Heart right ventricle (tissue), 16 donors: ENCODE measurements at regions of chr10 and their contacts with region 1.

Region 1: GRCh38 chr10:114550756-114551635 is 107.1 kb downstream of the ABLIM1 start:
- DNase-seq: peak; percentile 59 to 80
- ATAC-seq: peak; percentile 27 to 70 (median 48)
- H3K4me3 ChIP-seq: peak overlapping the region in 6 of 10 donors; percentile 12 to 36 (median 20)
- H3K27ac ChIP-seq: peak overlapping the region; percentile 58 to 78 (median 74)
- H3K4me1 ChIP-seq: peaks cover 10 to 99% (median 70%) of the 10 kb centered on the region in 9 donors
- H3K27me3 ChIP-seq: no peaks in the 10 kb centered on the region
- CTCF ChIP-seq: peak in 8 of 9 donors; percentile 17 to 70 (median 54)

Region 2: DNA sequence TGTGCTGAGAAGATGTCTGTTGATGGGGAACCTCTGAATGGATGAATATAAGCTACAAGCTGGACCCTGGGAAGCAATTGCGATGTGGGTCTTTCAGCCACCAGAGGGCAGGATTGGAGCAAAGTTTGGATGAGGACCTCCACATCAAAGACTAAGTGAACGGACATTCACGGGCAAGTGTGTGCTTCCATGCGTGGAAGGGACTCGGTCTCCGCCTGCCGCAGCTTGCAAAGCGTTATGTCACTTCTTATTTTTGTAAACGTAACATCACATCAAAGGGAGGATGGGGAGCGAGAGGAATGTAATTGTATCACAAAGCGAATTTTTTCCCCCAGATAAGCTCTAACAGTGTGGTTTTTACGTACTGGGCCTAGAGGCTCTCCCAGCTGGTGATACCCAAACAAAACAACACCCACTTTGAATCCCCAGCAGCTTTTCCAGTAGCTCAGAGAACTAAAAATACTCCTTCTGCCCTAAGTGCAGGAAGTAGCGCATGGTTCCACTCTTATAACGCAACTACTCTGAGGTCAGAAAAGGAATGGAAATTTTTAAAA is 246.9 kb before region 1 on chr10:
- intact Hi-C with region 1: loop called in 3 of 10 experiments (anchors 5 to 10 kb)
- DNase-seq: peak; percentile 73 to 90
- ATAC-seq: peak; percentile 80 to 91 (median 87)
- H3K4me3 ChIP-seq: peak overlapping the region in 9 of 10 donors; percentile 26 to 51 (median 44)
- H3K27ac ChIP-seq: peak overlapping the region in 8 of 10 donors; percentile 14 to 65 (median 44)
- H3K4me1 ChIP-seq: peaks cover 7 to 46% (median 28%) of the 10 kb centered on the region in 9 donors
- H3K27me3 ChIP-seq: no peaks in the 10 kb centered on the region
- CTCF ChIP-seq: peak; percentile 72 to 86 (median 78)

Region 3: DNA sequence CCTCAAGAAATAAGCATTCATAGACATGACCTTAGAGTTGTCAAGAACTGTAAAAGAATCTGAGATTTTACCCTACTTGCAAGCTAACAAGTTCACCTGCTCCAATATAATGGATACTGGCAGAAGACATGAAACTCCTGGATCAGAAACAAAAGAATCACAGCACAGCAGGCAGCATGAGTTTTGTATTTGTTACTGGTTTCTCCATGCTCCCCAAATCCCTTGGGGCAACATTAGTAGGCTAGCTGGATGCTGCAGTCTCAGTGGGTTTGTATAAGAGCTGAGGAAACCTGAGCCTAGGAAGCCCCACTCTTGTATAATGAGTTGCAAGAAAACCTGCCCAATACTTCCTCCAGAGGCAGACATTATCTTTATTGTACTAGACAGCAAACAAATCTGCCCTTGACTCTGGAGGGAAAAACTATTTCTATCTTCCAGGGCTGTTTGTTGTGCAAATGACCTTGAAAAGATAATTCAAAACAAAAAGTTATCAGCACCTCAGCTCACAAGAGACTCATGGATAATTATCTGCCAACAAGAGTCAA is 42.3 kb after region 1 on chr10:
- intact Hi-C with region 1: no loop called
- DNase-seq: no peak
- ATAC-seq: no peak
- H3K4me3 ChIP-seq: no peak overlapping the region
- H3K27ac ChIP-seq: peak overlapping the region in 4 of 10 donors; percentile 7 to 49 (median 30)
- H3K4me1 ChIP-seq: peaks cover 0 to 62% (median 30%) of the 10 kb centered on the region in 9 donors
- H3K27me3 ChIP-seq: no peaks in the 10 kb centered on the region
- CTCF ChIP-seq: no peak

Region 4: GRCh38 chr10:114615600-114616007 is 64.6 kb after region 1 on chr10:
- intact Hi-C with region 1: loop called in 2 of 10 experiments (anchors 5 to 10 kb)
- DNase-seq: no peak
- ATAC-seq: peak in 1 of 8 donors; percentile 12
- H3K4me3 ChIP-seq: no peak overlapping the region
- H3K27ac ChIP-seq: peak overlapping the region in 7 of 10 donors; percentile 2 to 64 (median 30)
- H3K4me1 ChIP-seq: peaks cover 22 to 98% (median 81%) of the 10 kb centered on the region in 9 donors
- H3K27me3 ChIP-seq: no peaks in the 10 kb centered on the region
- CTCF ChIP-seq: no peak

Region 5: DNA sequence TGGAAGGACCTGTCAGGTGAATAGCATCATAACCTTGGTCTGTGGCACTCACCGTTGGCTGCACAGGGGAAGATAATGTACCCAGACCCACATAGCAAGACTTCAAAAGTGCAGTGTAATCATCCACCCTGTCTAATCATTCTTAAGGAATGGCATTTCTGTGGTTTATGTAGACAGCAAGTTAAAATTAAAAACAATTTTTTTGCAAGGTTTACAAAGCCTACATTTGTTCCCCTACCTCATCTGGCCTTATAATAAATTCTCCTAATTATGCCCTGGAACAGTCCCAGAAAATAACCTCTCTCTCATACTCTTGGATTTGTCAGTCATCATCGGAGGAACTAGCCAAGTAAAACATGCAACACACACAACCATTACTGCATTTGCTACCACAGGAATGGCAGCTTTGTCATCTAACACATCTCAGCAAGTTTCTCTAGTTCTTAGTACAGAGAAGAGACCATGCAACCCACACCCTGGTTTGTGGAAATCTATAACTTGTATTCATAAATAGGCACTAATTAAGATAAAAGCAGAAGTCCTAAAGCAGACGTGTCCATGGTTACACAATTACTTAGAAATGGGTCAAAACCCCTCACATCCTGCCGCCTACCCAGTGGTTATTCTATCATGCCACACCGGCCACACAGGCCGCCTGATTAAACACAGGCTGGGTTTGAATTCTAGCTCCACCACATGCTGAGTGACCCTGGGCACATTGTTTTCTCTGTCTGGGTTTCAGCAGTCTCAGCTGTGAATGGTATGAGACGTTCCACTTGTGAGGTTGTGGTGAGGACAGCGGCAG is 88.0 kb after region 1 on chr10:
- intact Hi-C with region 1: loop called in 4 of 10 experiments (anchors 5 kb)
- DNase-seq: no peak
- ATAC-seq: peak in 4 of 8 donors; percentile 14 to 50 (median 36)
- H3K4me3 ChIP-seq: no peak overlapping the region
- H3K27ac ChIP-seq: peak overlapping the region in 5 of 10 donors; percentile 2 to 63 (median 48)
- H3K4me1 ChIP-seq: peaks cover 0 to 91% (median 51%) of the 10 kb centered on the region in 9 donors
- H3K27me3 ChIP-seq: no peaks in the 10 kb centered on the region
- CTCF ChIP-seq: no peak

Region 6: GRCh38 chr10:114703377-114704107 is 152.5 kb after region 1 on chr10:
- intact Hi-C with region 1: loop called in 7 of 10 experiments (anchors 5 to 10 kb)
- DNase-seq: no peak
- ATAC-seq: peak in 7 of 8 donors; percentile 32 to 54 (median 42)
- H3K4me3 ChIP-seq: no peak overlapping the region
- H3K27ac ChIP-seq: peak overlapping the region in 2 of 10 donors; percentile 27 to 38
- H3K4me1 ChIP-seq: peaks cover 0 to 59% (median 26%) of the 10 kb centered on the region in 9 donors
- H3K27me3 ChIP-seq: no peaks in the 10 kb centered on the region
- CTCF ChIP-seq: peak; percentile 31 to 76 (median 62)

Region 7: GRCh38 chr10:114767101-114767985 is 216.3 kb after region 1 on chr10:
- intact Hi-C with region 1: loop called in 1 of 10 experiments (anchors 5 kb)
- DNase-seq: peak in 1 of 2 donors; percentile 48
- ATAC-seq: peak; percentile 64 to 86 (median 78)
- H3K4me3 ChIP-seq: peak overlapping the region; percentile 69 to 92 (median 86)
- H3K27ac ChIP-seq: peak overlapping the region; percentile 85 to 96 (median 93)
- H3K4me1 ChIP-seq: peaks cover 0 to 47% (median 21%) of the 10 kb centered on the region in 9 donors
- H3K27me3 ChIP-seq: peaks cover 0 to 36% (median 0%) of the 10 kb centered on the region in 7 donors
- CTCF ChIP-seq: no peak